ENCODE measurements at regions of chr11 and their contacts with region 1.

Region 1: DNA sequence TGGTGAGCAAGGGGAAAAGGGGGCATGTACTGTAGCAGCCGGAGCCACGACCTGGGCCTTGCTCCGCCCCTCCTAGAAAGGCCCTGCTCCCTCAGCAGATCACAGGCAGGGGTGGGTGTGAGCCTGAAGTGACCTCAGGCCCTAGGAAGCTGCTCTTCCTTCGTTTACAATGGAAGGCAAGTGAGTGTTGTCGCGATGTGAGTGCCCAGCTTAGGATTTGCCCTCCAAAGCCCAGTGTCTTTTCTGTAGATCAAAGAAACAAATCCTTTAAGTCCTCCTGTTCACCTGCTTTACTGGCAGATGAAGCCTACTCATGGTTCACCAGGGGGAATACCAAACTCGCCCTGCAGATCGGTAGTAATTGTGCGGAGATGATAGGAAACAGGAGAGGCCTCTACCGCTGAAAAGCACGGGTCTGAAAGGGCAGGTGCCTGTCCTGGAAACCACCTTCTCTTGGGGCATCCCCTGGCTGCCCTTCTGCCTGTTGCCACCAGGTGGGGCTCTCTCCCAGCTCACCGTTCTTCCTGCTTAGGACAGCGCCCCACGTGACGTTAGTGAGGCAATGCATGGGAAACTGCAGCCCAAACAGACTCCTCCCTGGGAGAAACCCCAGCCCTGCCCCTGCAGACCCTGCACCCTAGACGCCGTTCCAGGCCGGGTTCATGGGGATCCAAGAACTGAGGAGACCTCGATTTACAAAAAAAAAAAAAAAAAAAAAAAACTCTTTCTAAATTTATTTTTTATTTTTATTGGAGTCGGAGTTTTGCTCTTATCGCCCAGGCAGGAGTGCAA is 45.9 kb upstream of the RAB1B start:
- DNase-seq: peak; percentile 75
- H3K4me3 ChIP-seq: no peak overlapping the region
- H3K27ac ChIP-seq: no peak overlapping the region
- H3K27me3 ChIP-seq: no peaks in the 10 kb centered on the region
- CTCF ChIP-seq: peak; percentile 100

Region 2: DNA sequence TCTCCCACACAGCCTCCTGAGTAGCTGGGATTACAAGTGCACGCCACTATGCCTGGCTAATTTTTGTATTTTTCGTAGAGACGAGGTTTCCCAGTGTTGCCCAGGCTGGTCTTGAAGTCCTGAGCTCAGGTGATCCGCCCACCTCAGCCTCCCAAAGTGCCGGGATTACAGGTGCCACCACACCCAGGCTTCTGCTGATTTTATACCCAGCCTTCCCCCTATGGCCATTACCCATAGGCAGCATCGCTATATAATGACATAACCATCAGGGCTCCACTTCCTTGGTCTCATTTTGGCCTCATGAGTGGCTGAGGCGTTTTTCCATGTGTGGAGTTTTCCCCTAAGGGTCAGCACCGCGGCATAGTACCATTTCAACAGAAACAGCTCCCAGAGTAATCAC is 14.7 kb before region 1 on chr11:
- CTCF ChIA-PET with region 1: interaction called, 14 read pairs
- POLR2A ChIA-PET with region 1: no interaction called
- DNase-seq: no peak
- H3K4me3 ChIP-seq: no peak overlapping the region
- H3K27ac ChIP-seq: no peak overlapping the region
- H3K27me3 ChIP-seq: no peaks in the 10 kb centered on the region
- CTCF ChIP-seq: no peak

Region 3: DNA sequence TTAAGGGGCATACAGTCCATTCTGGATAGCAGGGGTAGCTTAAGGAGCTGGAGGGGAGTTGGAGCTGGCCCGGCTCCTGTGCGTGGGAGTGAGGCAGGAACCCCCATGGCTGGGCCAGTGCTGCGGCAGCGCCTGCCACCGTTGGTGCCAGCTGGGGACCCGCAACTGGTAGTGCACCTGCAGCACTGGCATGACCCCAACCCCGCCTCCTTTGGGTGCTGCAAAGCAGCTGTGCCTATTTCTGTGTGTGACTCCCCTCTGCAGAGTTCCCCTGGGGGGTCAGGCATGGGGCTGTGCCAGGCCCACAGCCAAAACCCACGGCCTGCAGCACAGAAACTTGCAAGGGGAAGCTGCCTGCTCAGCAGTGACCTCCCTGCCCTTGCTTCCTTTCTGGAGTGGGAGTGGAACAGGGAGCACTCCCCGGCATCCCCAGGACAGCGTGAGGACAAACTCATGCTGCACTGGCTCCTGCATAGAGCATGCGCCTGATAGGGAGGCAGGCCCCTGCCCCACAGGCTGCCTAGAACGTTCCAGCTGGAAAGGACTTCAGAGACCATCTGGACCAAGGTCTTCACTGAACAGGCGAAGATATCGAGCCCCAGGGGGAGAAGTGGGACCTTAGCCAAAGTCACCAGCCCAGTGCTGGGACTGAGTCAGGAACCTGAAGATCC is 19.7 kb after region 1 on chr11:
- CTCF ChIA-PET with region 1: interaction called, 15 read pairs
- POLR2A ChIA-PET with region 1: no interaction called
- DNase-seq: no peak
- H3K4me3 ChIP-seq: no peak overlapping the region
- H3K27ac ChIP-seq: no peak overlapping the region
- H3K27me3 ChIP-seq: no peaks in the 10 kb centered on the region
- CTCF ChIP-seq: no peak

Region 4: GRCh38 chr11:66288671-66289547 is 66.4 kb after region 1 on chr11 and contains the start of gene YIF1A:
- CTCF ChIA-PET with region 1: interaction called, 16 read pairs
- POLR2A ChIA-PET with region 1: interaction called, 3 read pairs
- DNase-seq: peak; percentile 99
- H3K4me3 ChIP-seq: peak within 1 kb of the TSS; percentile 84
- H3K27ac ChIP-seq: peak within 1 kb of the TSS; percentile 100
- H3K27me3 ChIP-seq: peaks cover 19% of the 10 kb centered on the region
- CTCF ChIP-seq: no peak
- polyA plus RNA-seq, gene YIF1A: 126 and 140 TPM in 2 replicates

Region 5: DNA sequence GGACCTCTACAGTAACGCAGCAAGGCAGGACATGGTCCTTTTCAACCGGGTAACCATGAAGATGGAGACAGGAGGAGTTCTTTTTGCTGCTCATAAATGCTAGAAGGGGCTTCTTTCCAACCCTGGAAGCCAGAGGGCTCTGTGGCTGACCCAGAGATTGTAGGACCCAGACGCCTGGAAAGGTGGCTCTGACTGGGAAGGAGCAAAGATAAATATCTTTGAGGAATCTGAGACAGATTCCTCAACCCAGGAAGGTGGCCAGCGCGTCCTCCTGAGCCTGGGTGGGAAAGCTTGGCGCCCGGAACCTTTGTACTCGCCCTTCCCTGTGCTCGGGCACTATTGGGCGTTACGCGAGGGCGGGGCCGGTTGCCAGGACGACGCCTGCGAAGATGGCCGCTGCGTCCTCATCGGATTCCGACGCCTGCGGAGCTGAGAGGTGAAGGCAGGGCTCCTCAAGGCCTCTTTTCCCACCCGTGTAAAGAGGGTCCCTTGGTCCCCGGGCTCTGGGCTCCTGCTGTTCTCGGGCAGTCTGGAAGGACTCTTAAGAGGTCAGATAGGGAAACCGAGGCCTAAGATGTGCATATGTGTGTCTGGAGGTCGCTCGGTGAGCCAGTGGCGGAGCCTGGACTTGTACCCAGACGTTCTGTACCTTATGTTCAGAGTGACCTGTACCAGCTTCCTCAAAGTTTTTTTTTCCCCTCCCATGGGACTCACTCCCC is 287.9 kb after region 1 on chr11 and contains the start of gene BBS1:
- CTCF ChIA-PET with region 1: no interaction called
- POLR2A ChIA-PET with region 1: no interaction called
- DNase-seq: peak; percentile 26
- H3K4me3 ChIP-seq: peak within 1 kb of the TSS; percentile 97
- H3K27ac ChIP-seq: peak within 1 kb of the TSS; percentile 2
- H3K27me3 ChIP-seq: no peaks in the 10 kb centered on the region
- CTCF ChIP-seq: no peak; the same call in 1 of the 2 replicates
- polyA plus RNA-seq, gene BBS1: 17.7 and 21.1 TPM in 2 replicates

Measured in AG04450 (cell line).